ENCODE measurements at regions of chr6 and their contacts with region 1.

Region 1: GRCh38 chr6:63764318-63764916 is 128.8 kb downstream of the PHF3 start:
- DNase-seq: no peak
- ATAC-seq: no peak
- H3K4me3 ChIP-seq: no peak overlapping the region
- H3K27ac ChIP-seq: no peak overlapping the region
- H3K4me1 ChIP-seq: no peaks in the 10 kb centered on the region
- H3K27me3 ChIP-seq: peaks cover 0 to 7% (median 0%) of the 10 kb centered on the region in 7 donors
- CTCF ChIP-seq: peak; percentile 47 to 80 (median 74)

Region 2: GRCh38 chr6:63347599-63347998 is 416.8 kb before region 1 on chr6:
- intact Hi-C with region 1: loop called in 9 of 10 experiments (anchors 2 to 10 kb)
- DNase-seq: no peak
- ATAC-seq: no peak
- H3K4me3 ChIP-seq: no peak overlapping the region
- H3K27ac ChIP-seq: no peak overlapping the region
- H3K4me1 ChIP-seq: peaks cover 0 to 5% (median 0%) of the 10 kb centered on the region in 9 donors
- H3K27me3 ChIP-seq: no peaks in the 10 kb centered on the region
- CTCF ChIP-seq: no peak

Region 3: GRCh38 chr6:63598049-63599036 is 166.1 kb before region 1 on chr6:
- intact Hi-C with region 1: loop called (anchors 1 to 5 kb)
- DNase-seq: peak; percentile 49 to 63
- ATAC-seq: peak; percentile 86 to 98 (median 94)
- H3K4me3 ChIP-seq: peak overlapping the region; percentile 30 to 61 (median 56)
- H3K27ac ChIP-seq: peak overlapping the region in 1 of 10 donors; percentile 16
- H3K4me1 ChIP-seq: peaks cover 0 to 16% (median 6%) of the 10 kb centered on the region in 9 donors
- H3K27me3 ChIP-seq: peaks cover 0 to 8% (median 0%) of the 10 kb centered on the region in 7 donors
- CTCF ChIP-seq: peak; percentile 68 to 90 (median 85)

Region 4: DNA sequence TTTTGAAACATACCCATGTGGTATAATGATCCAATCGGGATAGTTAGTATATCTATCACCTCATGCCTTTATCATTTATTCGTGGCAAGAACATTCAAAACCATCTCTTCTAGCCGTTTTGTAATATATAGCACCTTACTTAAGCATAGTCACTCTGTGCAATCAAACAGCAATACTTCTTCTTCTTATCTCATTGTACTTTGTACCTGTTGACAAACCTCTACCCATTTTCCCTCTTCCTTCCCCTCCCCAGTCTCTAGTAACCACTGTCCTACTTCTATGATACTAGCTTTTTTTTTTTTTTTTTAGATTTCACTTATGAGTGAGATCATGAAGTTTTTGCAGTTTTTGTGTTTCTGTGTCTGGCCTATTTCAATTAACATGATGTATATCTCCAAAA is 1645.9 kb after region 1 on chr6:
- intact Hi-C with region 1: no loop called
- DNase-seq: no peak
- ATAC-seq: no peak
- H3K4me3 ChIP-seq: no peak overlapping the region
- H3K27ac ChIP-seq: no peak overlapping the region
- H3K4me1 ChIP-seq: no peaks in the 10 kb centered on the region
- H3K27me3 ChIP-seq: no peaks in the 10 kb centered on the region
- CTCF ChIP-seq: no peak